Posterior vena cava (tissue), 2 donors: ENCODE measurements at regions of chr4 and their contacts with region 1.

Region 1: DNA sequence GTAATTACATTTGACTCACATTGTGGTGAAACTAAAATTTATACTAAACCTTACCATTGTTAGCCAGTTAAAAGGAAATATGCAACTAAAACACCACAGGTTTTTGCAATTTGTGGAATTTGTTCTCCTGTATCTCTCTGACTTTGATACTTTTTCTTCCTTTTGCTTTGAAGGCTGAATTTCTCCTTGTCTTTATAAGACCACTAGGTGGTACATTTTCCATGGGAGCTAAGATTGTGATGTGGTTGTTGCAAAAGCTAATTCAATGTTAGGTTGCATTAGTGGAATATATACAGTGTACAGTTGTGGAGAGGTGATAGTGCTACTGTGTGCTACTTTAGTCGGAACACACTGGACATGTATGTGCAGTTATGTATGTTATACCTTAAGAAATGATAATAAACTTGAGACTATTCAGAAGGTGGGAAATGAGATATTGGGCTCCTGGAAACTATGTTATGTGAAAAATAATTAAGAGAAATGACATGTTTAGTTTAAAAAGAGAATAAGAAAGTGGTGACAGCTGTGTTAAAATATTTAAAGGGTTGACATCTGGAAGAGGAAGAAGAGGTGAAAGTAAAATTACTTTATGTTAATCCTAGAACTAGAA is 70.3 kb downstream of the ARL9 start:
- DNase-seq: no peak

Region 2: GRCh38 chr4:56655209-56655626 is 79.3 kb after region 1 on chr4:
- intact Hi-C with region 1: loop called in 1 of 2 experiments (anchors 10 kb)
- DNase-seq: peak; percentile 79